IMR-90 (cell line): ENCODE measurements at regions of chr12 and their contacts with region 1.

Region 1: GRCh38 chr12:10562306-10562933 is 51.0 kb downstream of the MAGOHB start:
- DNase-seq: peak; percentile 54
- ATAC-seq: peak; percentile 48; the same call in 1 of the 2 replicates
- H3K4me3 ChIP-seq: no peak overlapping the region
- H3K27ac ChIP-seq: no peak overlapping the region
- H3K4me1 ChIP-seq: no peaks in the 10 kb centered on the region
- H3K27me3 ChIP-seq: peaks cover 11% of the 10 kb centered on the region
- CTCF ChIP-seq: peak; percentile 71
- POLR2A ChIP-seq: no peak
- RAD21 ChIP-seq: peak; percentile 74

Region 2: GRCh38 chr12:10033783-10034545 is 528.5 kb before region 1 on chr12:
- CTCF ChIA-PET with region 1: no interaction called
- POLR2A ChIA-PET with region 1: no interaction called
- dilution Hi-C with region 1: no loop called
- in situ Hi-C with region 1: no loop called
- intact Hi-C with region 1: loop called (anchors 2 kb)
- DNase-seq: peak; percentile 18
- ATAC-seq: peak; percentile 50
- H3K4me3 ChIP-seq: no peak overlapping the region
- H3K27ac ChIP-seq: no peak overlapping the region
- H3K4me1 ChIP-seq: no peaks in the 10 kb centered on the region
- H3K27me3 ChIP-seq: no peaks in the 10 kb centered on the region
- CTCF ChIP-seq: peak; percentile 72
- POLR2A ChIP-seq: no peak
- RAD21 ChIP-seq: peak; percentile 72

Region 3: GRCh38 chr12:10235761-10236631 is 326.4 kb before region 1 on chr12:
- CTCF ChIA-PET with region 1: interaction called, 8 read pairs
- POLR2A ChIA-PET with region 1: no interaction called
- dilution Hi-C with region 1: no loop called
- in situ Hi-C with region 1: loop called (anchors 10 kb)
- intact Hi-C with region 1: loop called (anchors 1 kb)
- DNase-seq: peak; percentile 44
- ATAC-seq: peak; percentile 87
- H3K4me3 ChIP-seq: no peak overlapping the region
- H3K27ac ChIP-seq: no peak overlapping the region
- H3K4me1 ChIP-seq: peaks cover 1% of the 10 kb centered on the region; the same call in 1 of the 2 replicates
- H3K27me3 ChIP-seq: no peaks in the 10 kb centered on the region; the same call in 1 of the 2 replicates
- CTCF ChIP-seq: peak; percentile 79
- POLR2A ChIP-seq: no peak
- RAD21 ChIP-seq: peak; percentile 84

Region 4: DNA sequence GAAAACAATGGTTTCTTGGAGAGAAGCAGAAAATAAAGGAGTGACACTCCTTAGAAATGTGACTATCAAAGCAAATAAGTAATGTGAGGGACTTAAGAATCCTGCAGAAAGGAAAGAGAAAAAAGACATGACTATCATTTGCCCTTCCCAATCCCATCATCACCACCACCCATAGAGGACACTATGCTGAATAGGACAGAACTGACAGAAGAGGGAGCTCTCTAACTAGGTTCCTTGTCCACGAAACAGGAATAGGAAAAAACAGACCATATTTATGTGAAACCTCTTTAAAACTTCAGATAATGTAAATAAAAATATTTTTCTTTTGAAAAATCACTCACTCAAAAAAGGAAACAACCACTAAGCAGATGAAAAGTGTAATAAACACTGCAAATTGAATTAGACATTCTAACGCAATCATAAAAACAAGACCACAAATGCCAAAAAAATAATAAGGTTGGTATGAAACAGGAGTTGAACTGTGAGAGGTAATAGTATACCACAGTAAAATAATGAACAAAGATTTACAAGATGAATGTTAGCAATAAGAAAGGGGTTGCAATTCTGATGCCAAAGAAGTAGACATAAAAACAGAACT is 230.7 kb before region 1 on chr12:
- CTCF ChIA-PET with region 1: interaction called, 3 read pairs
- POLR2A ChIA-PET with region 1: no interaction called
- dilution Hi-C with region 1: no loop called
- in situ Hi-C with region 1: loop called (anchors 10 kb)
- intact Hi-C with region 1: loop called (anchors 1 kb)
- DNase-seq: peak; percentile 62
- ATAC-seq: peak; percentile 94
- H3K4me3 ChIP-seq: no peak overlapping the region
- H3K27ac ChIP-seq: no peak overlapping the region
- H3K4me1 ChIP-seq: no peaks in the 10 kb centered on the region
- H3K27me3 ChIP-seq: peaks cover 4% of the 10 kb centered on the region
- CTCF ChIP-seq: peak; percentile 90
- POLR2A ChIP-seq: no peak
- RAD21 ChIP-seq: peak; percentile 87

Region 5: GRCh38 chr12:10543499-10543898 is 18.9 kb before region 1 on chr12:
- CTCF ChIA-PET with region 1: no interaction called
- POLR2A ChIA-PET with region 1: no interaction called
- dilution Hi-C with region 1: no loop called
- in situ Hi-C with region 1: no loop called
- intact Hi-C with region 1: no loop called
- DNase-seq: no peak
- ATAC-seq: no peak
- H3K4me3 ChIP-seq: no peak overlapping the region
- H3K27ac ChIP-seq: no peak overlapping the region
- H3K4me1 ChIP-seq: no peaks in the 10 kb centered on the region
- H3K27me3 ChIP-seq: no peaks in the 10 kb centered on the region; the same call in 1 of the 2 replicates
- CTCF ChIP-seq: no peak
- POLR2A ChIP-seq: no peak
- RAD21 ChIP-seq: no peak

Region 6: GRCh38 chr12:10673660-10674384 is 111.4 kb after region 1 on chr12 and contains the start of gene STYK1:
- CTCF ChIA-PET with region 1: no interaction called
- POLR2A ChIA-PET with region 1: no interaction called
- dilution Hi-C with region 1: no loop called
- in situ Hi-C with region 1: no loop called
- intact Hi-C with region 1: loop called (anchors 1 kb)
- DNase-seq: peak; percentile 8
- ATAC-seq: peak; percentile 90
- H3K4me3 ChIP-seq: peak within 1 kb of the TSS; percentile 73
- H3K27ac ChIP-seq: no peak within 1 kb of the TSS
- H3K4me1 ChIP-seq: no peaks in the 10 kb centered on the region
- H3K27me3 ChIP-seq: peaks cover 10% of the 10 kb centered on the region
- CTCF ChIP-seq: peak; percentile 85
- POLR2A ChIP-seq: 0 out of 2 replicates have a peak, but pooled peaks have one; percentile 22
- RAD21 ChIP-seq: peak; percentile 84
- total RNA-seq, gene STYK1: 0.72 and 1.1 TPM in 2 replicates